H1 (cell line): ENCODE measurements at regions of chr19 and their contacts with region 1.

Region 1: DNA sequence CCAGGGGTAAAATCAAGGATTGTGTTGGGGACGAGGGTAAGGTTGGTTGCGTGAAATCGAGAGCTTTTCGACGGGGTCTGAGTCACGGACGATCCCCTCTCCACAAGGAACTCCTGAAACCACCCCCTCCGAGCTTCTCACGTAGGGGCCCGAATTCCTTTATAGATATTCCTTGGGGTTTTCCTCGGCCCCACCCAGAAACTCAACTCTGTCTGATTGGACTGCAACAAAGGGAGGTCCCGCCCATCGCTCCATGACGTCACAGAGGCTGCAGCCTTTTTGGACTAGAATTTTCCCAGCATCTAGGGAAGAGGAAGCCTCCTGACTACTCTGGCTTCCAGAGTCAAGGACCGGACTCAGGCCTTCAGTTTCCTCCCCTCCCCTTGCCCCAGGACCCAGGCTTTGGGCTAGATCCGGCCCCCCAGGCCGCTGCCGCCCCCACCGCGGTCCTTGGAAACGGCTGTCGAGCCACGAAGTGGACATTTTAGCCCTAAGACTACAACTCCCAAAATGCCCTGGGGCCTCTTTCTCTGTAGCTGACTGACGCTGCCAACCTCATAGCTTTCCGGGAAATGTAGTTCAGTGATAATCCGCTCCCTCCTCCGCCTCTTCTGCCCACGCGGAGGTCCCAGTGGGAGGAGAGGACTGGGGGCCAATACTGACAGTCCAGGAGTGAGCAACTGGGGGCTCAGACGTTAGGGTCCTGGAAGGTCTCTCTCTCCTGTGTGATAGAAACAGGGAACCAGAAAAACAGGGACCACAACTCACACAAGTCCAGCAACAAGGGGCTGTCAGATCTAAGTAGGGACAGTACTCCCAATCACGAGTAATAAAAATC is at the start of gene IZUMO1:
- DNase-seq: peak in 1 of 2 experiments; percentile 97
- H3K4me3 ChIP-seq: peak within 1 kb of the TSS; percentile 57 to 73 (median 61)
- H3K27ac ChIP-seq: peak within 1 kb of the TSS; percentile 66; the same call in 1 of the 2 replicates
- H3K4me1 ChIP-seq: peaks cover 4 to 6% (median 5%) of the 10 kb centered on the region in 4 experiments
- H3K27me3 ChIP-seq: no peaks in the 10 kb centered on the region
- CTCF ChIP-seq: no peak
- EP300 ChIP-seq: no peak
- POLR2A ChIP-seq: peak in 1 of 2 experiments; percentile 77; a peak in 2 of 3 replicates
- RAD21 ChIP-seq: no peak
- total RNA-seq, gene IZUMO1: 1.7 and 1.8 TPM in 2 replicates

Region 2: GRCh38 chr19:48724796-48725753 is 21.9 kb before region 1 on chr19:
- CTCF ChIA-PET with region 1: interaction called, 4 read pairs
- POLR2A ChIA-PET with region 1: interaction called, 12 read pairs
- DNase-seq: no peak
- H3K4me3 ChIP-seq: no peak overlapping the region
- H3K27ac ChIP-seq: no peak overlapping the region
- H3K4me1 ChIP-seq: peaks cover 0 to 11% (median under 1%) of the 10 kb centered on the region in 4 experiments; a peak in 4 of 7 replicates
- H3K27me3 ChIP-seq: no peaks in the 10 kb centered on the region
- CTCF ChIP-seq: no peak
- EP300 ChIP-seq: no peak
- POLR2A ChIP-seq: no peak
- RAD21 ChIP-seq: no peak

Region 3: GRCh38 chr19:48760504-48761205 is 13.7 kb after region 1 on chr19:
- CTCF ChIA-PET with region 1: interaction called, 3 read pairs
- POLR2A ChIA-PET with region 1: interaction called, 30 read pairs
- DNase-seq: no peak
- H3K4me3 ChIP-seq: no peak overlapping the region
- H3K27ac ChIP-seq: no peak overlapping the region
- H3K4me1 ChIP-seq: peaks cover 0 to 7% (median 4%) of the 10 kb centered on the region in 4 experiments; a peak in 5 of 7 replicates
- H3K27me3 ChIP-seq: no peaks in the 10 kb centered on the region
- CTCF ChIP-seq: no peak
- EP300 ChIP-seq: no peak
- POLR2A ChIP-seq: no peak
- RAD21 ChIP-seq: no peak